MCF 10A (cell line): ENCODE measurements at regions of chr7 and their contacts with region 1.

Region 1: GRCh38 chr7:116679500-116679899 is 7.5 kb downstream of the MET start:
- DNase-seq: peak; percentile 85
- H3K4me3 Mint-ChIP-seq: peak overlapping the region; percentile 15
- H3K27ac Mint-ChIP-seq: peak overlapping the region; percentile 82
- H3K4me1 Mint-ChIP-seq: peaks cover 51% of the 10 kb centered on the region
- H3K27me3 Mint-ChIP-seq: no peaks in the 10 kb centered on the region
- CTCF ChIP-seq: no peak

Region 2: GRCh38 chr7:116041615-116042014 is 637.9 kb before region 1 on chr7:
- CTCF ChIA-PET with region 1: no interaction called
- POLR2A ChIA-PET with region 1: no interaction called
- intact Hi-C with region 1: no loop called
- DNase-seq: no peak
- H3K4me3 Mint-ChIP-seq: no peak overlapping the region
- H3K27ac Mint-ChIP-seq: no peak overlapping the region
- H3K4me1 Mint-ChIP-seq: no peaks in the 10 kb centered on the region
- H3K27me3 Mint-ChIP-seq: peaks cover 82% of the 10 kb centered on the region
- CTCF ChIP-seq: no peak

Region 3: DNA sequence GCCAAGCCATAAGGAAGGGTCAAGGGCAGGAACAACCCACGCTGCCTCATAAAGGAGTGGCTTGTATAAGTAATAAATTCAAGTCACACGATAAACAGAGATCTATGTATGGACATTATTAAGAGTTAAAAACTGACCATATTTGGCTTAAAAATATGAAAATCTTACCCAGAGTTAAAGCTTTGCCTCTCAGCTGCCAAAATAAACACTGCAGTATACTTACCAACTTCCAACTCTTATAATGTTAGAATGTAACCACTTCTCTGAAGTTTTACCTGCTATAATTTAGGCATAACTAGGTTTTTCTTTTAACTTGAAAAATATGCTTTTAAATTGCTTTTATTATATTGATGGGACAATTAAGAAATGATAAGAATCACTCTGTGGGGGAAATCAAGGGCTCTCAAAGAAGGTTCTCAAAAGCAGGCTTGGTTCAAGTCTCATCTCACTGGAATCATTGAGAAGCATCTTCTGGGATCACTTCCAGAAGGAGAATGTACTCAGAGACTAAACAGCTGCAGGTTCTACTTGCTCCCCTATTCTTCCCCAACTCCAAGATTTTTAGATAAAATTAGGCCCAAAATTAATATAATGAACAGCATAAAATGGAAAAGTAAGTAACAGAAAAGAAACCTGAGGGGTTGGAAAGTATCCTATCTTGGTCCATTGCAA is 196.1 kb before region 1 on chr7:
- CTCF ChIA-PET with region 1: no interaction called
- POLR2A ChIA-PET with region 1: no interaction called
- intact Hi-C with region 1: no loop called
- DNase-seq: no peak
- H3K4me3 Mint-ChIP-seq: no peak overlapping the region
- H3K27ac Mint-ChIP-seq: no peak overlapping the region
- H3K4me1 Mint-ChIP-seq: no peaks in the 10 kb centered on the region
- H3K27me3 Mint-ChIP-seq: no peaks in the 10 kb centered on the region
- CTCF ChIP-seq: no peak

Region 4: DNA sequence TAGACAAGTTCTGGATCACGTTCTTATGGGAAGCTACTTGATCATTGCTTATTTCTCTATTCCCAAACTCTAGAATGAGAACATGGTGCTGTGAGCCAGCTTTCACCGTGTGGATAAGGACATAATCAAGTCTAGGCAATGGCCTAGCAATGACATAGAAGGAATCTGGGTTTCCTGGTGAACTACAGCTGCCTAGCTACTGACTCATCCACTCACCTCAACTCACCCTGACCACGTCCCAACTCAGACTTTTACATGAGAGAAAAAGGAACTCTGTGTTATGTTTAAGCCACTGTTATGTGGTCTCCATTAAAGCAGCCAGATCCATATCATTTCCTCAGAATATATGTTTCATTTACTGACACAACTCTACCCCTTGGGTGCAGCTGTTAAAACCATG is 26.3 kb before region 1 on chr7:
- CTCF ChIA-PET with region 1: interaction called, 62 read pairs
- POLR2A ChIA-PET with region 1: interaction called, 91 read pairs
- intact Hi-C with region 1: no loop called
- DNase-seq: peak; percentile 83
- H3K4me3 Mint-ChIP-seq: no peak overlapping the region
- H3K27ac Mint-ChIP-seq: peak overlapping the region; percentile 64
- H3K4me1 Mint-ChIP-seq: peaks cover 17% of the 10 kb centered on the region
- H3K27me3 Mint-ChIP-seq: no peaks in the 10 kb centered on the region
- CTCF ChIP-seq: no peak

Region 5: GRCh38 chr7:116698930-116699710 is 19.6 kb after region 1 on chr7:
- CTCF ChIA-PET with region 1: no interaction called
- POLR2A ChIA-PET with region 1: interaction called, 77 read pairs
- intact Hi-C with region 1: no loop called
- DNase-seq: no peak
- H3K4me3 Mint-ChIP-seq: no peak overlapping the region
- H3K27ac Mint-ChIP-seq: no peak overlapping the region
- H3K4me1 Mint-ChIP-seq: peaks cover 20% of the 10 kb centered on the region
- H3K27me3 Mint-ChIP-seq: no peaks in the 10 kb centered on the region
- CTCF ChIP-seq: no peak

Region 6: GRCh38 chr7:116715077-116715476 is 35.6 kb after region 1 on chr7:
- CTCF ChIA-PET with region 1: interaction called, 3 read pairs
- POLR2A ChIA-PET with region 1: interaction called, 54 read pairs
- intact Hi-C with region 1: no loop called
- DNase-seq: no peak
- H3K4me3 Mint-ChIP-seq: no peak overlapping the region
- H3K27ac Mint-ChIP-seq: peak overlapping the region; percentile 84
- H3K4me1 Mint-ChIP-seq: peaks cover 43% of the 10 kb centered on the region
- H3K27me3 Mint-ChIP-seq: no peaks in the 10 kb centered on the region
- CTCF ChIP-seq: no peak